ENCODE measurements at regions of chr19 and their contacts with region 1.

Region 1: GRCh38 chr19:48321622-48322591 is 3.4 kb upstream of the EMP3 start:
- DNase-seq: peak; percentile 99
- ATAC-seq: peak; percentile 68
- H3K4me3 Mint-ChIP-seq: peak overlapping the region; percentile 82
- H3K27ac Mint-ChIP-seq: peak overlapping the region; percentile 97
- H3K4me1 Mint-ChIP-seq: peaks cover 56% of the 10 kb centered on the region
- H3K27me3 Mint-ChIP-seq: no peaks in the 10 kb centered on the region

Region 2: GRCh38 chr19:48170038-48170812 is 151.7 kb before region 1 on chr19 and contains the starts of genes LIG1 and ZSWIM9:
- CTCF ChIA-PET with region 1: no interaction called
- POLR2A ChIA-PET with region 1: no interaction called
- intact Hi-C with region 1: loop called in 1 of 2 experiments (anchors 1 kb)
- DNase-seq: peak; percentile 96
- ATAC-seq: peak; percentile 90
- H3K4me3 Mint-ChIP-seq: peak within 1 kb of the TSS; percentile 79
- H3K27ac Mint-ChIP-seq: peak within 1 kb of the TSS; percentile 95
- H3K4me1 Mint-ChIP-seq: peaks cover 30% of the 10 kb centered on the region
- H3K27me3 Mint-ChIP-seq: no peaks in the 10 kb centered on the region
- total RNA-seq, gene LIG1: 193 to 194 TPM
- total RNA-seq, gene ZSWIM9: 7.4 to 10.9 TPM

Region 3: DNA sequence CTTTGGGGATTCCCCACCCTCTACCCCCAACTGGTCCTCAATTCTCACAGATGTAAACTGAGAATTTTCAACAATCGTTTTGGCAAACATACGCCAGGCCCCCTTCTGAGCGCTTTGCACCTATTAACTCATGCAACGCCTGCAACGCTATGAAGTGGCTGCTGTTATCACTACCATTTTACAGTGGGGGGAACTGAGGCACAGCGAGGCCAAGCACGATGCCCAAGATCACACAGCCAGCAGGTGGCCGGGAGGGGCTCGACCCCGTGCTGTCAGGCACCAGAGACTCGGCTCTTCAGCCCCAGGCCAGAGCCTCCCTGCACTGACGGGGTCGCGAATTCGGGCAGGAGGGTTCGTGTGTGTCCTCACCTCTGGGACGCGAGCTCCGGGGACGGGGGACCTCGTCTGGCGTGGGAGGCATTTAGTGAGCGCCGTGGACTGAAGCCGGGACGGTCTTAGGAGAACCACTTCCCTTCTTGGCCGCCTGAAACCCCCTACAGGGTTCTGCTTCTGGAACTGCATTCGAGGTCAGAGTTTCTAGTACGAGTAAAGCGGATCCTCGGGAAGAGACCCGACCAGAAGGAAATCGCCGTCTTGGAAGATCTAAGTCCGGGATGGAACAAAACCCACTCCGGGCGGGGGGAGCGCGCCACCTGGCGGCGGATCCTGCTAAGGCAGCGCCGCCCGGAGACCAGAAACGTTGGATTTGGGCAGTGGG is 31.0 kb before region 1 on chr19:
- CTCF ChIA-PET with region 1: no interaction called
- POLR2A ChIA-PET with region 1: no interaction called
- intact Hi-C with region 1: no loop called
- DNase-seq: peak; percentile 74
- ATAC-seq: peak; percentile 53
- H3K4me3 Mint-ChIP-seq: peak overlapping the region; percentile 64
- H3K27ac Mint-ChIP-seq: no peak overlapping the region
- H3K4me1 Mint-ChIP-seq: peaks cover 3% of the 10 kb centered on the region
- H3K27me3 Mint-ChIP-seq: peaks cover under 1% of the 10 kb centered on the region

Region 4: GRCh38 chr19:48363810-48364563 is 42.1 kb after region 1 on chr19 and contains the starts of genes SYNGR4 and TMEM143:
- CTCF ChIA-PET with region 1: interaction called, 5 read pairs
- POLR2A ChIA-PET with region 1: interaction called, 5 read pairs
- intact Hi-C with region 1: loop called (anchors 1 kb)
- DNase-seq: peak; percentile 99
- ATAC-seq: peak; percentile 90
- H3K4me3 Mint-ChIP-seq: peak within 1 kb of the TSS; percentile 84
- H3K27ac Mint-ChIP-seq: peak within 1 kb of the TSS; percentile 95
- H3K4me1 Mint-ChIP-seq: peaks cover 13% of the 10 kb centered on the region
- H3K27me3 Mint-ChIP-seq: no peaks in the 10 kb centered on the region
- total RNA-seq, gene SYNGR4: 0.25 TPM in 1 of 2 experiments, not detected in the other
- total RNA-seq, gene TMEM143: 18.9 to 21.5 TPM

Region 5: DNA sequence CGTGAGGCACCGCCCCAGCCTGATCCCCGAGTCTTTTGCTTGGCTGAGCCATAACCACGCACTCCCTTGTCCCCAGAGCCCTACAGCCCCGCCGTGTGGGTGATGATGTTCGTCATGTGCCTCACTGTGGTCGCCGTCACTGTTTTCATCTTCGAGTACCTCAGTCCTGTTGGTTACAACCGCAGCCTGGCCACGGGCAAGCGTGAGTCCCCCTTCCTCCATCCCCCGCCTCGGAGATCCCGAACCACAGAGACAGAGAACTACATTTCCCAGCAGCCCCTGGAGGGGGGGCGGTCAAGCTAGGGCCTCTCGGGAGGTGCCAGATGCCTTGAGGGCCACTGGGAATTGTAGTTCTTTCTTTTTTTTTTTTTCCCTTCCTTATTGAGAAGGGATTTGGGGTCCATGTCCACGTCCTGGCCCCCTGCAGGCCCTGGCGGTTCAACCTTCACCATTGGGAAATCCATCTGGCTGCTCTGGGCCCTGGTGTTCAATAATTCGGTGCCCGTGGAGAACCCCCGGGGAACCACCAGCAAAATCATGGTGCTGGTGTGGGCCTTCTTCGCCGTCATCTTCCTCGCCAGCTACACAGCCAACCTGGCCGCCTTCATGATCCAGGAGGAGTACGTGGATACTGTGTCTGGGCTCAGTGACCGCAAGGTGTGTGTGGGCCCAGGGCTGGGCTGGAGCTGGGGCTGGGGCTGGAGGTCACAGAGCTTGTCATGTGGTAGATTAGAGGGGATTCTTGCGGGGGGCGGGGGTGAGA is 97.4 kb after region 1 on chr19:
- CTCF ChIA-PET with region 1: no interaction called
- POLR2A ChIA-PET with region 1: interaction called, 3 read pairs
- intact Hi-C with region 1: loop called in 1 of 2 experiments (anchors 1 kb)
- DNase-seq: peak; percentile 87
- ATAC-seq: peak; percentile 81
- H3K4me3 Mint-ChIP-seq: peak overlapping the region; percentile 29
- H3K27ac Mint-ChIP-seq: peak overlapping the region; percentile 83
- H3K4me1 Mint-ChIP-seq: peaks cover 21% of the 10 kb centered on the region
- H3K27me3 Mint-ChIP-seq: peaks cover 15% of the 10 kb centered on the region

Region 6: DNA sequence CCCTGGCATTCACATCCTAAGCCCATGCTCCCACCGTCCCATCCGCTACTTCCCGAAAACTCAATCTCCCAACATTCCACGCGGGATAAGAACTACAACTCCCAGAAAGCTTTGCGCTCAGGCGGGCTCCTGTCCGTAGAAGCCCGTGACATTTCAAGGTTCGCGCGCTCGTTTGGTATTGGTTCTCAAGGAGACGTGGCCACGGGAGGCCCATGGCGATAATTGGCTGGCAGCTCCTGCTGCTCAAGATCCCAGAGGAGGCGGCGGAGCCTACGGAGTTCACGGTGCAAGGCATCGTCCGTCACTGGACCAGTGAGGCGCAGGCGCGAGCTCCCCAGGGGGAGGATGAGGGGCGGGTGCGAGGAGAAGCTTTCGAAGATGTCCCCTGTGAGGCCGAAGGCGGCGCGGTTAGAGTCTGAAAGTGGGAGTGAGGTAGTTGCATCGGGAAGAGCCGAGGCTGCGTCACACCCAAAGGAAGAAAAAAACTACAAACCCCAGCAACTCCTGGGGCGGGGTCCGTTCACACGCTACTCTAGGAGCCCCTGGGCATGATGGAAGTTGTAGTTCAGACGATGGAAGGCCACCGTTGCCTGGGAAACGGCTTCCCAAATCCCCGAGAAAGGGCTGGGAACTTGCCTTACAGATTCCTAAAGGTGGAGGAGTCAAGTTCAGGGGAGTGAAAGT is 398.8 kb after region 1 on chr19:
- CTCF ChIA-PET with region 1: no interaction called
- POLR2A ChIA-PET with region 1: no interaction called
- intact Hi-C with region 1: loop called in 1 of 2 experiments (anchors 5 kb)
- DNase-seq: peak; percentile 97
- ATAC-seq: peak; percentile 96
- H3K4me3 Mint-ChIP-seq: peak overlapping the region; percentile 80
- H3K27ac Mint-ChIP-seq: peak overlapping the region; percentile 97
- H3K4me1 Mint-ChIP-seq: peaks cover 14% of the 10 kb centered on the region
- H3K27me3 Mint-ChIP-seq: no peaks in the 10 kb centered on the region